CD8-positive, alpha-beta T cell (primary cell): ENCODE measurements at regions of chr20 and their contacts with region 1.

Region 1: DNA sequence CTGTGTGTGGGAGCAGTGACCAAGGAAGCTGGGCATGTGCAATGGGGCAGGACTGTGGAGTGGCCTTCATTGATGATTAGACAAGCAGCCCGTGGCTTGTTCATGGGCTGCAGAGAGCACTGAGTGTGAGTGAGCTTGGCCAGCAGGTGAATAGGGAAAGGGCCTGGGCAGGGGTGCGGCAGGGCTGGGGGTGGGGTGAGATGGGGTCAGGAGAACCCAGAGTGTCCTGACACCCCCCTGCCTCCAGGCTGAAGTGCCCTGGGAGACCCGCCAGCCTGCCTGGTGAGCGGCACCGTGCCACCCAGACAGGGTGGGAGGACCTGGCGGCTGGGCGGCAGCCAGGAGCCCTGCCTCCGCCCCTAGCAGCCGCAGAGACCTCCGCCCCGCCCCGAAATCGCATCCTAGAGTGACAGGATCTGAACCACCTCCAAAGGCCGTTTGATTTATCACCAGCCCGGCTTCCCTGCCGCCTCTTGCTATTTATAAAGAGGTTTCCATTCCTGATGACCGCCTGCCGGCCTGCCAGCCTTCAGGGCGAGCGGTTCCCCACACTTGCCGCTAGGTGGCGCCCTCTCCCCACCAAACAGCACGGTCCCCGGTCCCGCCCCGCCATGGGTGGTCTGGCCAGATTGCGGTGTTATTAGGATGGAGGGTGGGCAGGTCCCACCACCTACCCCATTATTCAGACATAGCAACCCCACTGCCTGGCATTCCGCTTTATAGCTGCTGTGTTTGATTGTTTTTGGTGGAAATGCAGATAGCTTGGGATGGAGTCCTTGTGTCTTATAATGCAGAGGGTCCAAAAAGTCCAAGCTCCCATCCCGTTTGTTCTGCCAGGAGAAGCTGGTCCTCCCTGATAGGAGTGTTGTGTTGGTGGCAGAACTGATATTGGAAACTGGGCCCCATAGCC is 3.5 kb downstream of the MYLK2 start:
- DNase-seq: peak; percentile 53 to 88 (median 78)
- ATAC-seq: peak; percentile 88
- H3K4me3 ChIP-seq: no peak overlapping the region
- H3K4me3 Mint-ChIP-seq: no peak overlapping the region
- H3K27ac ChIP-seq: no peak overlapping the region
- H3K27ac Mint-ChIP-seq: no peak overlapping the region
- H3K4me1 ChIP-seq: peaks cover 6% of the 10 kb centered on the region
- H3K4me1 Mint-ChIP-seq: peaks cover 6% of the 10 kb centered on the region
- H3K27me3 ChIP-seq: peaks cover 0 to 4% of the 10 kb centered on the region in 2 experiments
- H3K27me3 Mint-ChIP-seq: no peaks in the 10 kb centered on the region
- CTCF ChIP-seq: peak; percentile 98

Region 2: DNA sequence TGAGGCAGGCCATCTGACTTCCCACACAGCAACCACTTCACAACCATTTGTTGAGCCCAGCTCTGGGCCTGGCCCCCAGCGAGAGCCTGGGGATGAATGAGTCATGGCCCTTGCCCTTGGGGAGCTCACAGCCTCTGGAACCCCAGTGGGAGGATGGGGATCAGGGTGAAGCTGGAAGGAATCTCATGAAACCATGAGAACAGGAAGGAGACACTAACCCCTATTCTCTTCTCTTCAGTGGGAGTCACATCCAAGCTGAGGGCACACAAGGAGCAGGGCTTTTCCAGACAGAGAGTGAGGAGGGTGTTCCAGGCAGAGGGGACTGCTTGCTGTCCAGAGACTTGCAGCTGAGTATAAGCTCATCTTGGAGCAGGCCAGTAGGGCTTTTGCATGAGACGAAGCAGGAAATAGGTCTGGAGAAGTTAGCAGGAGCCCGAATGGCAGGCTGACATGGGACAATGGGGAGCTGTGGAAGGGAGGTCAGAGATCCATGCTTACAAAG is 15.3 kb after region 1 on chr20:
- CTCF ChIA-PET with region 1: interaction called, 16 read pairs
- POLR2A ChIA-PET with region 1: no interaction called
- intact Hi-C with region 1: no loop called
- DNase-seq: no peak
- ATAC-seq: no peak
- H3K4me3 ChIP-seq: no peak overlapping the region
- H3K4me3 Mint-ChIP-seq: no peak overlapping the region
- H3K27ac ChIP-seq: no peak overlapping the region
- H3K27ac Mint-ChIP-seq: no peak overlapping the region
- H3K4me1 ChIP-seq: no peaks in the 10 kb centered on the region
- H3K4me1 Mint-ChIP-seq: peaks cover 8% of the 10 kb centered on the region
- H3K27me3 ChIP-seq: peaks cover 0 to 2% of the 10 kb centered on the region in 2 experiments
- H3K27me3 Mint-ChIP-seq: no peaks in the 10 kb centered on the region
- CTCF ChIP-seq: no peak

Region 3: DNA sequence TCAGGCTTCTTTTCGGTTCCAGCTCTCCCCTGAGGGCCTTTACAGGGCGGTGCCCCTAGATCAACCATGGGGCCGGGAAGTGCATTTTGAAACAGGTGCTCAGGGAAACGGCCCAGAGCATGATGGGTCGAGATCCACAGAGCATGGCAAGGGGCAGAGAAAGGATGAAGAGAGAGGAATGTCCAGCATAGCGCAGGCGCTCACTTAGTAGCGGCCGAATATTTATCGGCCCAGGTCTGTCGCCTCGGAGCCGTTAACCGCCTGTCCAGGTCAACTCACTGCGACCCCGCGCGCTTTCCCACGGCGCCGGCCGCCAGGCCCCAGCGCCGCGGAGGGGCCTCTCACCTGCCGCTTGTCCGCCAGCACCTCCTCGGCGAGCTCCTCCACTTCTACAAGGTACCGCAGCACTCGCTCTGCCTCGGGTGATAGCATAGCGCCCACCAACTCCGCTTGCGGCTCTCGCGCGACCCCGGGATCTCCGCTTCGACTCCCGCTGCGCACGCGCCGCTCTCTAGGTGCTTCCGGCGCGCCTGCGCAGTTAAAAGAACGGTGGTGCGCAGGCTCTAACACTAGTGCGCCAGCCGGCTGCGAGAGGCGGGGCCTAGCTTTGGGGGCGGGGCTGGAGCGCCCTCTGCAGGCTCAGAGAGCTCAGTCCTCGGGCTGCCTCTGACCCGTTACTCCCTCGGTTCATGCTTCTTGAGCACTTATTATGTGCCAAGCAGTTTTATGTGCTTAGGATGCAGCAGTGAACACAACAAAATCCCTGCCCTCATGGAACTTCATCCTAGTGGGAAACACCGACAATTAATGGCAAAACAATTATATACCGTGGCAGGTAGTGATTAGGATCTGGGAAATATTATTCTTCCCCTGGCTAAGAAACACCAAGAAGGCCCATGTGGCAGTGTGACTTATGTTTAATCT is 129.1 kb after region 1 on chr20 and contains the start of gene PDRG1:
- CTCF ChIA-PET with region 1: interaction called, 8 read pairs
- POLR2A ChIA-PET with region 1: no interaction called
- intact Hi-C with region 1: loop called (anchors 1 kb)
- DNase-seq: peak; percentile 91 to 98 (median 97)
- ATAC-seq: peak; percentile 98
- H3K4me3 ChIP-seq: peak within 1 kb of the TSS; percentile 84 to 96
- H3K4me3 Mint-ChIP-seq: peak within 1 kb of the TSS; percentile 97
- H3K27ac ChIP-seq: peak within 1 kb of the TSS; percentile 46 to 71
- H3K27ac Mint-ChIP-seq: peak within 1 kb of the TSS; percentile 96
- H3K4me1 ChIP-seq: peaks cover 16% of the 10 kb centered on the region
- H3K4me1 Mint-ChIP-seq: peaks cover 31% of the 10 kb centered on the region
- H3K27me3 ChIP-seq: no peaks in the 10 kb centered on the region
- H3K27me3 Mint-ChIP-seq: peaks cover 12% of the 10 kb centered on the region
- CTCF ChIP-seq: peak; percentile 88
- total RNA-seq, gene PDRG1: 12.2 to 13.4 TPM

Region 4: DNA sequence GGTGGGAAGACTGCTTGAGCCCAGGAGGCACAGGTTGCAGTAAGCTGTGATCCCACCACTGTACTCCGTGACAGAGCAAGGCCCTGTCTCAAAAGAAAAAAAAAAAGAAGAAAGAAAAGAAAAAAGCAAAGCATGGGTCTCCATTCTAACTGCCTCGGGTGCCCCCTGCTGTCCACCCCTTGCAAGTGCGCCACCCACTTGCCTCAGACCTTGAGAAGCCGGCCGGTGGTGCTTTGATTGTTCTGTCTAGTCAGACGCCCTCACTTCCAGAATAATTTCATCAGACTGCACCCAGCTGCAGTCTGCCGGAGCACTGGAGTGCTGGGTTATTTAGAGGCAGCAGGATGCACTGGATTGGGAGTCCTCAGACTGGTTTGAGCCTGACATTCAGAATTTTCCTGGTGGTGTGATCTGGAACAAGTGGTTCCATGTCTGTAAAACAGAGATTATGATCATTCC is 269.2 kb after region 1 on chr20:
- CTCF ChIA-PET with region 1: interaction called, 21 read pairs
- POLR2A ChIA-PET with region 1: no interaction called
- intact Hi-C with region 1: loop called in 1 of 2 experiments (anchors 1 kb)
- DNase-seq: peak; percentile 56 to 80 (median 77)
- ATAC-seq: peak; percentile 98
- H3K4me3 ChIP-seq: no peak overlapping the region
- H3K4me3 Mint-ChIP-seq: no peak overlapping the region
- H3K27ac ChIP-seq: no peak overlapping the region
- H3K27ac Mint-ChIP-seq: no peak overlapping the region
- H3K4me1 ChIP-seq: no peaks in the 10 kb centered on the region
- H3K4me1 Mint-ChIP-seq: no peaks in the 10 kb centered on the region
- H3K27me3 ChIP-seq: no peaks in the 10 kb centered on the region
- H3K27me3 Mint-ChIP-seq: peaks cover 9% of the 10 kb centered on the region
- CTCF ChIP-seq: peak; percentile 94

Region 5: DNA sequence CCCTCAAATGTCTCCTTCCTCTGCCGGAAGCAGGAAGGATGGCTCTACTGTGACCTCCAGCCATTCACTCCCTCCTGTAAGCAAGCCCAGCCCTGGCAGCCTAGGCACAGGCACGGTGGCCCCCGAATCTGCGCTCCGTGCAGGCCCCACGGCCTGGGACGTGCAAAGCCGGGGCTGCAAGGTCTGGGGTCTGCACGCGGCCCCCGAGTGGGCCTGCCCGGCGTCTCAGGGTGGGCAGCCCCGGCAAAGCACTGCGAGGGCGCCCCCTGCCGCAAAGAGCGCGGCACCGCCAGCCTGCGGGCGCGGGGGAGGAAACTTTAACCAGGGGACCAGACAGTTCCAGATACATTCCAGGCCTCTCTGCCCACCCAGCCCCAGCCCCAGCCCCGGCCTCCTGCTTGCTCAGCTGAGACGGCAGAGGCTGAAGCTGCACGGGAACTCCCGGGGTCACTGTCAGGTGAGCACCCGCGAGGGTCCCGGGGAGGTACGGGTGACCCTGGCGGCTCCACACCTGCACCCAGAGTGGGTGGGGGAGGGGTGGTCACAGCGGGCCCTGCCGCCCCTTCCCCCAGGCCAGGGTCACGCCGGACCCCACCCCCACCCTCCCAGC is 634.3 kb after region 1 on chr20:
- CTCF ChIA-PET with region 1: no interaction called
- POLR2A ChIA-PET with region 1: no interaction called
- intact Hi-C with region 1: loop called in 1 of 2 experiments (anchors 10 kb)
- DNase-seq: peak in 2 of 9 experiments; percentile 28 to 40
- ATAC-seq: peak; percentile 29
- H3K4me3 ChIP-seq: no peak overlapping the region
- H3K4me3 Mint-ChIP-seq: no peak overlapping the region
- H3K27ac ChIP-seq: no peak overlapping the region
- H3K27ac Mint-ChIP-seq: no peak overlapping the region
- H3K4me1 ChIP-seq: no peaks in the 10 kb centered on the region
- H3K4me1 Mint-ChIP-seq: peaks cover 12% of the 10 kb centered on the region
- H3K27me3 ChIP-seq: no peaks in the 10 kb centered on the region
- H3K27me3 Mint-ChIP-seq: no peaks in the 10 kb centered on the region
- CTCF ChIP-seq: peak; percentile 26